Activated CD4-positive, alpha-beta memory T cell treated with anti-CD3 and anti-CD28 coated beads, Interleukin-2, amount 10 ng/mL, durations not matched to agents 7 days and 5 days (primary cell): ENCODE measurements at regions of chr13 and their contacts with region 1.

Region 1: DNA sequence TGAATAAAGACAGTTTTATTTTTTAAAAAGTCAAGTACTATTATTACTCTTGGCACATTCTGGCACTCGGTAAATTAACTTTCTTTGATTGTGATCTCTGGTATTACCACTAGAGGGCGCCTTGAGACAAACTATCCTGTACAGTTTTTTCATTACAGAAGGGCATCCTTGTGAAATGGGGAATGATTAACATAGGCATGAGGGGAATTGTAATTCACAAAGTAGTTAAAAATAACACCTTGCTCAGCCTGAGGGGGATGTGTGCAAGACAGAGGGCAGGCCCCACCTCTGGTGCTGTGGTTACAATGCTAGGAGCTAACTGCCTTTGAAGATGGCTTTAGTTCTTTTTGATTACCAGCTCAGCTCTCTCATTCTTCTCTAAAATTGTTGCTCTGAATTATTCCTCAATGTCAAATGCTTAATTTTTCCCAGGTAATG is 24.2 kb upstream of the C1QTNF9B start:
- DNase-seq: no peak
- H3K4me3 Mint-ChIP-seq: no peak overlapping the region
- H3K27ac Mint-ChIP-seq: no peak overlapping the region
- H3K4me1 Mint-ChIP-seq: no peaks in the 10 kb centered on the region
- H3K27me3 Mint-ChIP-seq: peaks cover 54% of the 10 kb centered on the region

Region 2: GRCh38 chr13:23899555-23899954 is 21.9 kb before region 1 on chr13:
- CTCF ChIA-PET with region 1: no interaction called
- POLR2A ChIA-PET with region 1: no interaction called
- DNase-seq: peak; percentile 43
- H3K4me3 Mint-ChIP-seq: no peak overlapping the region
- H3K27ac Mint-ChIP-seq: no peak overlapping the region
- H3K4me1 Mint-ChIP-seq: peaks cover 20% of the 10 kb centered on the region
- H3K27me3 Mint-ChIP-seq: peaks cover 34% of the 10 kb centered on the region

Region 3: DNA sequence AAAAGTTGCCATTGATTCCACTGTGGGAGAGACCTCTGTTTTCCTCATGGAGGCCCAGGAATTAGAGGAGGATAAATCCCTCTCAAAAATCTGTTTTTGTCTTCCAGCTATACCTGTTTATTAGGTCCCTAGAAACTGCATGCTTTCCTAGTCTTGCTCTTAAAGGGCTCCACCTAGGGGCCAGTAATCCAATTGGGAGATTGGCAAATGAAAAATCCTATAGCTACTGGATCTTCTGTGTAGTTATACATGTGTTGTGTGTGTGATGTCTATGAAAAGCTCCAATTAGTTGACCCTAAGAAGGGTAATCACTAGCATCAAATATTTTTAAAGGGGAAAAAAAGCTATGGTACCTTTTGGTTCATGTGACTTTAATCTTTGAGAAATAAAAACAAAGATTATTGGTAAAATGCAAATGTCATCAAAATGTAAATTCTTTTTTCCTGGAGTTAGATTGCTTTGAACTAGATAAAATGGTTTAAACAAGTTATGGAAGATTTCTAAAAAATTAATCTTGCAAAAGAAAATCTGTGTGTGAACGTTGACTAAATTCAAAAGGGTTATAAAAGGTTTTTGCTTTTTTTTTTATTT is 39.2 kb after region 1 on chr13:
- CTCF ChIA-PET with region 1: interaction called, 10 read pairs
- POLR2A ChIA-PET with region 1: interaction called, 3 read pairs
- DNase-seq: no peak
- H3K4me3 Mint-ChIP-seq: no peak overlapping the region
- H3K27ac Mint-ChIP-seq: no peak overlapping the region
- H3K4me1 Mint-ChIP-seq: peaks cover 38% of the 10 kb centered on the region
- H3K27me3 Mint-ChIP-seq: peaks cover 2% of the 10 kb centered on the region